BJ (cell line): ENCODE measurements at regions of chr3 and their contacts with region 1.

Region 1: DNA sequence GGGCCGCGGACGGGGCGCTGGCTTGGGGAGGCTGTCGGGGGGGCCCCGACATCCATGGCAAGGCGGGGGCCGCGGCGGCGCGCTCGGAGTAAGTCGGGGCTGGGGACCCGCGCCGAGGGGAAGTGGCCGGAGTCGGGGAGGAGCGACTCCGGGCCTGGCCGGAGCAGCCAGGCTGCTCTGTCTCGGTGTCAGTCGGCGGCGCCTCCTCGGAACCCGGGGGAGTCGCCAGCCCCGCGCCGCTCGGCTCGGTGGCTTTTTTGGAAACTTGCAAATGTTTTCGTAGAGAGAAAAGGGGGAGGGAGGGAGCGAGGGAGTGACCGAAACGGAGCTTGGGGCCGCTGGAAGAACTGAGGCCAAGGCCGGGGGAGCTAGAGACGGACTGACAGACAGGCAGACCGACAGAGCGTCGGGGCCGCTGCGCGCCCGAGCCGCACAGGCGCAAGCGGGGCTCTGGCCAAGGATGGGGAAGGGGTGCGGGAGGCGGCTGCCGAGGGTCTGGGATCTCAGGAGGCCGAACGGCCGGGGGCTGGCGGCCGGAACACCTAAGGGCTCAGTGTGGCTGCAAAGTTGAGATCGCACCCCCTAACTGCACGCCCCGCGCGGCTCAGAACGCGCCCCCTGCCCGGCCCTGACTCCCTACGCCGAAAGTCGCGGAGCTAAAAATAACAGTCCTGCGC is 5.0 kb downstream of the PTH1R start:
- DNase-seq: no peak
- H3K4me3 ChIP-seq: peak overlapping the region; percentile 43
- H3K27me3 ChIP-seq: peaks cover 27% of the 10 kb centered on the region
- CTCF ChIP-seq: no peak

Region 2: GRCh38 chr3:46909535-46910442 is 27.3 kb after region 1 on chr3:
- CTCF ChIA-PET with region 1: interaction called, 10 read pairs
- POLR2A ChIA-PET with region 1: no interaction called
- DNase-seq: no peak
- H3K4me3 ChIP-seq: no peak overlapping the region
- H3K27me3 ChIP-seq: no peaks in the 10 kb centered on the region
- CTCF ChIP-seq: peak; percentile 94

Region 3: GRCh38 chr3:46998121-46998851 is 115.8 kb after region 1 on chr3:
- CTCF ChIA-PET with region 1: no interaction called
- POLR2A ChIA-PET with region 1: no interaction called
- DNase-seq: no peak
- H3K4me3 ChIP-seq: no peak overlapping the region
- H3K27me3 ChIP-seq: no peaks in the 10 kb centered on the region
- CTCF ChIP-seq: peak; percentile 83